Prostate gland (tissue), 2 donors: ENCODE measurements at regions of chr1 and their contacts with region 1.

Region 1: GRCh38 chr1:12208764-12209494 is 20.9 kb upstream of the VPS13D start:
- DNase-seq: peak; percentile 76
- H3K4me3 ChIP-seq: no peak overlapping the region
- H3K27ac ChIP-seq: no peak overlapping the region
- H3K4me1 ChIP-seq: no peaks in the 10 kb centered on the region
- H3K27me3 ChIP-seq: no peaks in the 10 kb centered on the region
- CTCF ChIP-seq: peak; percentile 91 to 98 (median 95)
- POLR2A ChIP-seq: no peak

Region 2: DNA sequence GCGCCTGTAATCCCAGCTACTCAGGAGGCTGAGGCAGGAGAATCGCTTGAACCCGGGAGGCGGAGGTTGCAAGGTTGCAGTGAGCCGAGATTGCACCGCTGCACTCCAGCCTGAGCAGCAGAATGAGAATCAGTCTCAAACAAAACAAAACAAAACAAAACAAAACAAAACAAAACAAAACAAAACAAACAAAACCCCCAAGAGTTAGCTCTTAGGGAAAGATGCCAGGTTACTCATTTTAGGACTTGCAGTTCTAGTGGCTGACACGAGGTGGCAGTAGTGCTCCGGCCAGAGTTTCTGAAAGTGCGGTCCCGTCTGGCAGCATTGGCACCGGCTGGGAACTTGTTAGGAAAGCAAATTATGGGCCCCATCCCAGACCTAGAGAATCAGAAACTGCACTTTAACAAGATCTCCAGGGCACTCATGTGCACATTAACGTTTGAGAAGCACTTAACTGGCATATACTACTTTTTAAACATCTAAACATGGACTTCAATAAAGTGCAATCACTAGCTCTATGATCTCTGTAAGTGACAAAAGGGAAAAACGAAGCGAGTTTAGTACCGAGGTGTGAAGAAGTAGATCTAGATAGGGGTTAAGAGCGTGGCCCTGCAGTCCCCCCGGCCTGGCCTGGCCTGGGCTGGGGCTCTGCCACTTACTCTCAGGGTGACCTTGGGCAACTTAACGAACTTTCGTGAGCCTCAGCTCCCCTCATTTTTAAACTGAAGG is 84.1 kb before region 1 on chr1:
- intact Hi-C with region 1: loop called (anchors 2 kb)
- DNase-seq: peak; percentile 72
- H3K4me3 ChIP-seq: no peak overlapping the region
- H3K27ac ChIP-seq: no peak overlapping the region
- H3K4me1 ChIP-seq: no peaks in the 10 kb centered on the region
- H3K27me3 ChIP-seq: peaks cover 3% of the 10 kb centered on the region
- CTCF ChIP-seq: peak; percentile 95 to 98 (median 97)
- POLR2A ChIP-seq: no peak

Region 3: GRCh38 chr1:12143631-12144155 is 65.2 kb before region 1 on chr1:
- intact Hi-C with region 1: loop called (anchors 5 kb)
- DNase-seq: peak; percentile 33
- H3K4me3 ChIP-seq: no peak overlapping the region
- H3K27ac ChIP-seq: no peak overlapping the region
- H3K4me1 ChIP-seq: no peaks in the 10 kb centered on the region
- H3K27me3 ChIP-seq: no peaks in the 10 kb centered on the region
- CTCF ChIP-seq: no peak
- POLR2A ChIP-seq: no peak

Region 4: DNA sequence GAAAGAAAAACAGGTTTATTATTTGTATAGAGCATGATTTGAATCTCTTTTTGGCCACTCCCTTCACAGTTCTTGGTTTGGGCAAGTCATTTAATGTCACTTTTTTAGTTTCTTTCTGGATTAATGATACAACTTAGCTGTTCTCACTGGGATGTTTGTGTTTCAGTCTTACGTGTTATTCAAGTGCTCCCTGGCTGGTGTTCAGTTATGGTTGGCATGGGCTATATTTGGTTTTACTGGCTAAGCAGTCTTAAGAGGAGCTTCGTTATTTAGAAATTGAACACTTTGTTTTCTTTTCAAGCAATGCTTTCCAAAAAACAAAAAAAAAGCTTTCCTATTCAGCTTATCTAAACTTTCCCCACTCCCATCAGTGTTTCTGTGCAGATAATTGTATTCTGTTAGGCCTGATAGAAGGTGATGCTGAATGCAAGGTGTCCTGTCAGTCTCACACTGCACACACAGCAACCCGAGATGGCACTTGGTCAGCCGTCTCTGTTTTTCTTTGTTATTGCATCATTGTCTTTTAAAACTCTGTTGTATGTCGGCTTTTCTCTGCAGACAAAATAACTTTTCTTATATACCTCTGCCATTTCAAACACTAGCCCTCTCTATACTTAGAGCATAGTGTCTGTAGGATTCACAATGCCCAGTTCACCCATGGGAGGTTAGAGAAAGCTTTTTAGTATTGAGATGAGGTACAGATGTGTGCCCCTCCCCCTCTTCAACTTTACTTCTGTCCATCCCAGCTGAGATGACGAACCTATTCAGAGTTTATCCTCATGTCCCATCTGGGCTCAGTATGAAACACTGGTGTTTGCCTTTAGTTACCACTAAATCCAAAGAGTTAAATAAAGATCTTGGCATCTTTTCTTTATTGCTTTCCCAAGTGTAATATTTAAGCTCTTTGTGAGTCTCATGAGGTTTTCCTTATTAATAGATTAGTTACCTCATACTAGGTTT is 101.1 kb after region 1 on chr1:
- intact Hi-C with region 1: no loop called
- DNase-seq: peak; percentile 72
- H3K4me3 ChIP-seq: no peak overlapping the region
- H3K27ac ChIP-seq: peak overlapping the region; percentile 44 to 64
- H3K4me1 ChIP-seq: peaks cover 10% of the 10 kb centered on the region
- H3K27me3 ChIP-seq: no peaks in the 10 kb centered on the region
- CTCF ChIP-seq: no peak
- POLR2A ChIP-seq: no peak